Caco-2 (cell line): ENCODE measurements at regions of chr12 and their contacts with region 1.

Region 1: DNA sequence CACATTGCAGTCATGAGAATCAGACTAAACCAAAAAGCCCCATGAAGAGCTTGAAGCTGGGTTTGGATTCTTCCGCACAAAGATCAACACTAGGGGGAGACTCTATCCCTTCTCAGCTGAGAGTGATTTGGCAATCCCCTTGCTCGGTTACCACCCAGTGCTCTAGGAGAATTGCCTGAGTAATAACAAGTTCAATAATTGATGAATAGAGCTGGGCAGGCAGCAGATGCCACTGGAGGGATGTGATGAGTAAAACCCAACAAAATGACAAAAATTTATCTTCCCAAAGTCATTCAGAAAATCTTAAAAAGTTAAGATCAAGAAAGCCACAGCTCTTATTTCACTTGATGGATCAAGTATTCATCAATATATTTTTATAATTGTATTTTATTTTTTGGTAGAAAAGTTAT is 185.6 kb upstream of the ARID2 start:
- DNase-seq: peak; percentile 66 to 79
- H3K4me3 ChIP-seq: no peak overlapping the region
- H3K4me3 Mint-ChIP-seq: no peak overlapping the region
- H3K27ac Mint-ChIP-seq: no peak overlapping the region
- H3K4me1 ChIP-seq: peaks cover 20% of the 10 kb centered on the region
- H3K4me1 Mint-ChIP-seq: peaks cover 32% of the 10 kb centered on the region
- H3K27me3 ChIP-seq: no peaks in the 10 kb centered on the region
- H3K27me3 Mint-ChIP-seq: no peaks in the 10 kb centered on the region
- CTCF ChIP-seq: peak; percentile 91 to 93

Region 2: DNA sequence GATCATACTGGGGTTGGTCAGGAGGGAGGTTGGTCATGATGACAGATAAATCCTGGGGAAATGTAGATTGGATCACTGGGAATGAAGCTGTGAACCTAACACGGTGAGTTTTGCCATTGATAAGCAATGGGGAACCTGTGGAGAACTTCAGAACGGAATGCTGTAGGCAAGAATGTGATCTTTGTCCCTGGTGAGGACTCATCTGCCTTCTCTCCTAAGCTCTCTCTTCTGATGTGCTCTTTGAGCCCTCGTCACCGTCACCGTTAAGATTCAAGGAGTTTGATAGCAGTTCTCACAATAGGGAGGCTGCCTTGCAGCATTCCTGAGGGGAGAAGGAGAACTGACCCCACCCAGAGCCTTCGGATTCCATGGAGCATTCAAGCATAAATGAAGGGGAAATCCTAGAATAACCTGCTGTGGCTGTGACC is 110.5 kb before region 1 on chr12:
- CTCF ChIA-PET with region 1: no interaction called
- POLR2A ChIA-PET with region 1: no interaction called
- intact Hi-C with region 1: loop called (anchors 5 kb)
- DNase-seq: peak; percentile 90 to 96
- H3K4me3 ChIP-seq: no peak overlapping the region
- H3K4me3 Mint-ChIP-seq: peak overlapping the region; percentile 59
- H3K27ac Mint-ChIP-seq: peak overlapping the region; percentile 97
- H3K4me1 ChIP-seq: peaks cover 48% of the 10 kb centered on the region
- H3K4me1 Mint-ChIP-seq: peaks cover 44% of the 10 kb centered on the region
- H3K27me3 ChIP-seq: no peaks in the 10 kb centered on the region
- H3K27me3 Mint-ChIP-seq: no peaks in the 10 kb centered on the region
- CTCF ChIP-seq: no peak

Region 3: DNA sequence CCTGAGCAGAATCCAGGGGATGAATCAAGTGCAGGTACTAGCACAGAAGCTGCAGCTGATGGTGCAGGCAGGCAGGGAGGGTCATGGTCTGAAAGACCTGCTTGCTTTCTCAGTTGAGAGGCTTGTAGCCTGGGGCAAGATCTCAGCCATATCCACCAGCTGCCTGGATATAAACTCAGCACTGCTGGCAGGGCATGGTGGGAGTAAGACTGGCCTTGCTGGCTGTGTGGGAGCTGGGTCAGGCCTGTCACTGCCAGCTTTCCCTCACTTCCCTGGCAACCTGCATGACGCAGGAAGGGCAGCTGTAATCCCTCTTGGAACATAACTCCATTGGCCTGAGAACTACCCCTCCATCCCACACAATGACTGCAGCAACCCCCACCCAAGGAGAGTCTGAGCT is 97.9 kb before region 1 on chr12:
- CTCF ChIA-PET with region 1: no interaction called
- POLR2A ChIA-PET with region 1: no interaction called
- intact Hi-C with region 1: no loop called
- DNase-seq: no peak
- H3K4me3 ChIP-seq: no peak overlapping the region
- H3K4me3 Mint-ChIP-seq: no peak overlapping the region
- H3K27ac Mint-ChIP-seq: no peak overlapping the region
- H3K4me1 ChIP-seq: no peaks in the 10 kb centered on the region
- H3K4me1 Mint-ChIP-seq: no peaks in the 10 kb centered on the region
- H3K27me3 ChIP-seq: no peaks in the 10 kb centered on the region
- H3K27me3 Mint-ChIP-seq: no peaks in the 10 kb centered on the region
- CTCF ChIP-seq: no peak

Region 4: DNA sequence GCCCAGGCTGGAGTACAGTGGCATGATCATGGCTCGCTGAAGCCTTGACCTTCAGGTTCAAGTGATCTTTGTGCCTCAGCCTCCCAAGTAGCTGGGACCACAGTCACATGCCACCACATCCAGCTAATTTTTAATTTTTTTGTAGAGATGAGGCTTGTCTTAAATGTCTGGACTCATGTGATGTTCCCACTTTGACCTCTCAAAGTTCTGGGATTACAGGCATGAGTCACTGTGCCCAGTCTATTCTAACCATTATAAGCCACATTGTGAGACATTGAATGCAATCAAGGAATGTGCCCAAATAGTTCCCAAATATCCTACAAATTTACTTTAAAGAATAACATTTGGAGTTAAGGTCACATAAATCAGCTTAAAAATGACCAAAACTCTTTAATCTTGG is 54.9 kb after region 1 on chr12:
- CTCF ChIA-PET with region 1: interaction called, 4 read pairs
- POLR2A ChIA-PET with region 1: no interaction called
- intact Hi-C with region 1: loop called (anchors 5 kb)
- DNase-seq: no peak
- H3K4me3 ChIP-seq: no peak overlapping the region
- H3K4me3 Mint-ChIP-seq: no peak overlapping the region
- H3K27ac Mint-ChIP-seq: no peak overlapping the region
- H3K4me1 ChIP-seq: peaks cover 12% of the 10 kb centered on the region
- H3K4me1 Mint-ChIP-seq: peaks cover 27% of the 10 kb centered on the region
- H3K27me3 ChIP-seq: no peaks in the 10 kb centered on the region
- H3K27me3 Mint-ChIP-seq: no peaks in the 10 kb centered on the region
- CTCF ChIP-seq: no peak

Region 5: GRCh38 chr12:45703942-45704341 is 160.0 kb after region 1 on chr12:
- CTCF ChIA-PET with region 1: interaction called, 5 read pairs
- POLR2A ChIA-PET with region 1: no interaction called
- intact Hi-C with region 1: loop called (anchors 5 kb)
- DNase-seq: no peak
- H3K4me3 ChIP-seq: no peak overlapping the region
- H3K4me3 Mint-ChIP-seq: no peak overlapping the region
- H3K27ac Mint-ChIP-seq: no peak overlapping the region
- H3K4me1 ChIP-seq: peaks cover 47% of the 10 kb centered on the region
- H3K4me1 Mint-ChIP-seq: peaks cover 36% of the 10 kb centered on the region
- H3K27me3 ChIP-seq: no peaks in the 10 kb centered on the region
- H3K27me3 Mint-ChIP-seq: no peaks in the 10 kb centered on the region
- CTCF ChIP-seq: no peak

Region 6: GRCh38 chr12:45827974-45828373 is 284.1 kb after region 1 on chr12:
- CTCF ChIA-PET with region 1: no interaction called
- POLR2A ChIA-PET with region 1: no interaction called
- intact Hi-C with region 1: no loop called
- DNase-seq: no peak
- H3K4me3 ChIP-seq: no peak overlapping the region
- H3K4me3 Mint-ChIP-seq: no peak overlapping the region
- H3K27ac Mint-ChIP-seq: no peak overlapping the region
- H3K4me1 ChIP-seq: no peaks in the 10 kb centered on the region
- H3K4me1 Mint-ChIP-seq: no peaks in the 10 kb centered on the region
- H3K27me3 ChIP-seq: no peaks in the 10 kb centered on the region
- H3K27me3 Mint-ChIP-seq: no peaks in the 10 kb centered on the region
- CTCF ChIP-seq: no peak